Activated CD8-positive, alpha-beta T cell treated with anti-CD3 and anti-CD28 coated beads, Interleukin-2, amount 10 ng/mL, durations not matched to agents 7 days and 5 days (primary cell): ENCODE measurements at regions of chr1 and their contacts with region 1.

Region 1: DNA sequence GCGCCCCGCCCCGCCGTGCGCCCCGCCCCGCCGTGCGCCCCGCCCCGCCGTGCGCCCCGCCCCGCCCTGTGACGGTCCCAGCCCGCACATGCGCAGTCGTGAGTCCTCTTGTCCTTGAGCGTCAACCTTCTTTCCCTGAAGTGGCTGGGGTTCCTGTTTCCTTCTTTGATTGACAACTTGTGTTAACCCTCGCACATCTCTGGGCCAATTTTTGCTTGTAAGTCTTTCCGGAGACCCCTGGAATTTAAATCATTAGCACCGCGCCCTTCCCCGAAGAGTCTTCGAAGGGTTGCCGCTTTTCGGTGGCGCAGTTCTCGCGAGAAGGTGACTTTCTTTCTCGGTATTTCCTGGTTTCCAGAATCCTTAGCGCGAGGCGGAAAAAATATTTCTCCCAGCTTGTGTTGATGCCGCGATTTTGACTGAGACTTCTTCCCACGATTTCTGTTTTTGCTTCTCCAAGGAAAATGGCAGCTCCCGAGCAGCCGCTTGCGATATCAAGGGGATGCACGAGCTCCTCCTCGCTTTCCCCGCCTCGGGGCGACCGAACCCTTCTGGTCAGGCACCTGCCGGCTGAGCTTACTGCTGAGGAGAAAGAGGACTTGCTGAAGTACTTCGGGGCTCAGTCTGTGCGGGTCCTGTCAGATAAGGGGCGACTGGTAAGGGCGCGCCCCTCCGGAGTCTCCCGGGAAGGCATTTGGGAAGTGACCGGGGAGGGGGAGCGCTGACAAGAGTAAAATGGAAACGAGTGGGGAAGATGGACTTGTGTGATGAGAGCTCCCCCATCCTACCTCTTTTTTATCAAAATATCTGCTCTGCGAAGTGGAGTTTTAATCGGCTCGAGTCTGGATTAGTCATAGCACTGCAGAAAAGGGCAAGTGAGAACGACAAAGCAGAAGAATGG is at the start of gene RNPC3:
- DNase-seq: peak; percentile 90
- ATAC-seq: peak; percentile 83
- H3K4me3 Mint-ChIP-seq: peak within 1 kb of the TSS; percentile 99
- H3K27ac Mint-ChIP-seq: peak within 1 kb of the TSS; percentile 99
- H3K4me1 Mint-ChIP-seq: peaks cover 30% of the 10 kb centered on the region
- H3K27me3 Mint-ChIP-seq: peaks cover 5% of the 10 kb centered on the region
- total RNA-seq, gene RNPC3: 20.6 to 22.2 TPM

Region 2: DNA sequence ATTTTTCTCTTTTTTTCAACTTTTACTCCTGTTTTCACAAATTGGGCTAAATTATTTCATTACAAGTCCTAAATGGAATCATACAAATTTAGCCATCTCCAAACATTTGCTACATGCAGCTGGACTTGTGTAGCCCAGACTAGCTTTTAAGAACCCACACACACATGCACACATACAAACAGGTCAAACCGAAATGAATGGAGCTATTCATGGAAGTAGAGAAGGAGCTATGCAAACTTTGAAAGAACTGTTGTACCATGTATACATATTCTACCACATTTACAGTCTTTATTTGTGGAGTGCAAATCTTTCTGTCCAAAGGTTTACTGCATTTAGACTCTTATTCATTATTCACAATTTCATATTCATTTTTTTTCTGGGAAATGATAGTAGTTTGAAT is 189.4 kb before region 1 on chr1:
- CTCF ChIA-PET with region 1: no interaction called
- POLR2A ChIA-PET with region 1: no interaction called
- DNase-seq: no peak
- ATAC-seq: no peak
- H3K4me3 Mint-ChIP-seq: no peak overlapping the region
- H3K27ac Mint-ChIP-seq: no peak overlapping the region
- H3K4me1 Mint-ChIP-seq: no peaks in the 10 kb centered on the region
- H3K27me3 Mint-ChIP-seq: no peaks in the 10 kb centered on the region

Region 3: GRCh38 chr1:103514920-103515503 is 10.8 kb before region 1 on chr1:
- CTCF ChIA-PET with region 1: interaction called, 11 read pairs
- POLR2A ChIA-PET with region 1: interaction called, 4 read pairs
- DNase-seq: peak; percentile 35
- ATAC-seq: peak; percentile 81
- H3K4me3 Mint-ChIP-seq: no peak overlapping the region
- H3K27ac Mint-ChIP-seq: no peak overlapping the region
- H3K4me1 Mint-ChIP-seq: peaks cover 17% of the 10 kb centered on the region
- H3K27me3 Mint-ChIP-seq: no peaks in the 10 kb centered on the region

Region 4: GRCh38 chr1:103576065-103576464 is 50.2 kb after region 1 on chr1:
- CTCF ChIA-PET with region 1: no interaction called
- POLR2A ChIA-PET with region 1: no interaction called
- DNase-seq: no peak
- ATAC-seq: no peak
- H3K4me3 Mint-ChIP-seq: no peak overlapping the region
- H3K27ac Mint-ChIP-seq: no peak overlapping the region
- H3K4me1 Mint-ChIP-seq: no peaks in the 10 kb centered on the region
- H3K27me3 Mint-ChIP-seq: no peaks in the 10 kb centered on the region